Ovary (tissue), 10 donors: ENCODE measurements at regions of chr15 and their contacts with region 1.

Region 1: DNA sequence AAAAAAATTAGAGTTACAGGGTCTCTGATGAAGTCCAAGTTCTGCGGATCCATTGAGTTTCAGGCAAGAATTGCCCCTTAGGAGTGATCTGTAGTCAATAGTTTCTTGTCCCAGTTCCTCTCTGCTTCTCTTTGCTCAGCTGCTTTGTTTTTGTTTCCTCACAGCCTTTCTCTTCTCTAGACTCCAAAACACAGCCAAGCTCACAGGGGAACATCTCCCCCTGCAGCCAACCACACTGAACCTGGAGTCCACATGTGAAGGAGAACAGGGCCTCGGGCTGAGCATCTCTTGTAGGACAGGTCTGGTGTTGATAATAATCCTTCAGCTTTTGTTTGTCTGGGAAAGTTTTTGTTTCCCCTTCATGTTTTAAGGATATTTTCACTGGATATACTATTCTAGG is 202.6 kb upstream of the ATP10A start:
- DNase-seq: no peak
- H3K4me3 ChIP-seq: no peak overlapping the region
- H3K27ac ChIP-seq: no peak overlapping the region
- H3K4me1 ChIP-seq: no peaks in the 10 kb centered on the region
- H3K27me3 ChIP-seq: no peaks in the 10 kb centered on the region
- CTCF ChIP-seq: no peak
- EP300 ChIP-seq: no peak
- POLR2A ChIP-seq: no peak

Region 2: GRCh38 chr15:26013981-26014380 is 51.7 kb before region 1 on chr15:
- intact Hi-C with region 1: loop called in 1 of 4 experiments (anchors 10 kb)
- DNase-seq: no peak
- H3K4me3 ChIP-seq: no peak overlapping the region
- H3K27ac ChIP-seq: no peak overlapping the region
- H3K4me1 ChIP-seq: no peaks in the 10 kb centered on the region
- H3K27me3 ChIP-seq: no peaks in the 10 kb centered on the region
- CTCF ChIP-seq: no peak
- EP300 ChIP-seq: no peak
- POLR2A ChIP-seq: no peak

Region 3: GRCh38 chr15:26376243-26376642 is 310.5 kb after region 1 on chr15:
- intact Hi-C with region 1: no loop called
- DNase-seq: no peak
- H3K4me3 ChIP-seq: no peak overlapping the region
- H3K27ac ChIP-seq: no peak overlapping the region
- H3K4me1 ChIP-seq: no peaks in the 10 kb centered on the region
- H3K27me3 ChIP-seq: no peaks in the 10 kb centered on the region
- CTCF ChIP-seq: no peak
- EP300 ChIP-seq: no peak
- POLR2A ChIP-seq: no peak

Region 4: DNA sequence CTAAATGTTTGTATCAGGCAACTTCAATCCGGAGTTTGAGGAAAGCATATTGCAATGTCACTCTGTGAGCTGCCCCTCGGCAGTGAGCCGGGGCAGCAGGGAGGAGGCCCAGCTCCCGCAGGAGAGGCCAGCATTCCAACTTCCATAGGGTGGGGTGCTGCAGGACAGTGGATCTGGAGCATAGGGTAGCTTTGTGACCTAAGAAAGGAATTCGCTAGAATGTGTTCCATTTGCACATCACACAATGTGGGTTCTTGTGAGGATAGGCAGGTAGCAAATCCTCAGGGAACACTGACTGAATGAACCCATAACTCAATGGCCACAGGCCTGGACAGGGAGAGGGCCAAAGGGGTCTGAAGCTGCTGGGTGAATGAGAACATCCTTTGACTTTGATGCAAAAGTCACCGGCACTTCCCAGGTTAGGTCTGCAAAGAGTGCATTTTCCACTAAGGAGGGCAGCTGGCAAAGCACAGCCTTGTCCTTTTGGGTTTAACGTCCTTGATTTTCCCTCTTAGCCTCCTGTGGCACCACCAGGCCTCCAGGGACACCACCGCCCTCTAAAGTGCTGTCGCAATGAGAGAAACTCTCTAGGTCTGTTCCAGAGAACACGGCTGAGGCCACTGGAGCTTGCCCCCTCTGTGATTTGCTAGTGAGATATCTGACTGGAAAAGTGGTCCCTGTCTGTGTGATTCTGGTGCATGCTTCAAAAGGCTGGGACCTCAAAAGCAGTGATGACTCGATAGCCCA is 671.0 kb after region 1 on chr15:
- intact Hi-C with region 1: no loop called
- DNase-seq: no peak
- H3K4me3 ChIP-seq: no peak overlapping the region
- H3K27ac ChIP-seq: no peak overlapping the region
- H3K4me1 ChIP-seq: no peaks in the 10 kb centered on the region
- H3K27me3 ChIP-seq: no peaks in the 10 kb centered on the region
- CTCF ChIP-seq: no peak
- EP300 ChIP-seq: no peak
- POLR2A ChIP-seq: no peak